Activated B cell treated with CpG ODN at 0.5 μM for 24 hours (primary cell): ENCODE measurements at regions of chr16 and their contacts with region 1.

Region 1: DNA sequence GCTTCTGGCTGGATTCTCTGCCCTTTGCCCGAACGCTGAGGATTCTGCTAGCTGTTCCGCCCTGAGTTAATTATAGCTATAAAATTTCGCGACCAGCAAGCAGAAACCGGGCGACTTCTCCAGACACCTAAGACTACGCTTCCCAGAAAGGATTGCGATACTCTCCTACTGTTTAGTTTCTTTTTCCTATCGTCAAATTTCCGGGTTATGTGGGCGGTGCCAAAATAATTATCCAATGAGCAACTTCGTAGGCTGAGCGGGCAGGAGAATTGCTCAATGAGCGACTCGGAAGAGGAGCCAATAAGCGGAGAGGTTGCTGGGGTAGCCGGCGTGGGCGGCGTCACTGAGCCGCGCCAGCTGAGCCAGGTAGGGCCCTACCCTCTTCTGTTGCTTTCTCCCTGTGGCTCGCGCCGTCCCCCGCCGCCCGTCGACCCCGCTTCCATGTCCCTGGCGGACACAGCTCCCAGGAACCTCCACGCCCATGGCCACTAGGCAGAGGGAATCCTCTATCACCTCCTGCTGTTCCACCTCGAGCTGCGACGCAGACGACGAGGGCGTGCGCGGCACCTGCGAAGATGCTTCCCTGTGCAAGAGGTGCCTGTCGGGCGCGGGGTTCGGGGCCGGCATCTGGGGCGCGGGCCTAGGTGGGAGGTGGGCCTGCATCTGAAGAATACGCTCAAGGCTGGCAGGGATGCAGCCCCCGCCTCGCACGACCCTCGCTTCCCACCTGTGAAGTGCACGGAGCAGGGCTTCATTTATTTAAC is at the start of gene LCMT1:
- DNase-seq: peak; percentile 78
- ATAC-seq: peak; percentile 89
- H3K4me3 Mint-ChIP-seq: peak within 1 kb of the TSS; percentile 95
- H3K27ac Mint-ChIP-seq: peak within 1 kb of the TSS; percentile 94
- H3K4me1 Mint-ChIP-seq: peaks cover 41% of the 10 kb centered on the region
- H3K27me3 Mint-ChIP-seq: no peaks in the 10 kb centered on the region
- CTCF ChIP-seq: no peak
- total RNA-seq, gene LCMT1: 32.2 and 33.6 TPM in 2 replicates

Region 2: DNA sequence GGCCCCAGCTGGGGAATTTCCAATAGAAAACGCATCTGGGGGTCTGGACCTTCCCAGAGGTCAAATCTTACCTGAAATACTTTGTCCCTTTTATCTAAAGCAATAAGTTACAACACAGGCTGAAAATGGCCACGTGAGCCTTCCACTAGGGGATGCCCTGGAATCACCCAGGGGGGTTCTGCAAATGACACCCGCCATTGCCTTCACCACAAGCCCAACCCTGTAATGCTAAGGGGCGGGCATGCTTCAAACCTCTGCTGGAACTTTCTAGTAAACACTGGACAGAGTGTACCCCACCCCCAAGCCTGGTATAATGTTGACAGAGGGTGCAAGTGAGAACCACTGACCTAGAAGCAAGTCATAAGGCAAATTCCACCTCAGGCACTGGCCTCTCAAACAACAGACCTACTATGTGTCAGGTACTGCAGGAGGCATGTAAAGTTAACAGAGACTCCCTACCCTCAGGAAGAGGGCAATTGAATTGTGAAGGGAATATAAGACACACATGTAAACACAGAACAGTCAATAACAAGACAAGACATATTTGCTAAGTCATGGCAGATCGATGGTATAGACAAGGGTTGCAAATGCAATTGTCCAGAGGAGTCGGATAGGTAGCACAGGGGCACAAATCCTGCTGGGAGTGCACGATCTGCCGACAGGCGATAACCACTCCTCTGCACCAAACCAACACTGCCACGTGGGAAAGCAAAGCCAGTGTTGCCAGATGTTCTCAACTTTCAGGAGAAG is 155.4 kb before region 1 on chr16:
- CTCF ChIA-PET with region 1: interaction called, 3 read pairs
- POLR2A ChIA-PET with region 1: no interaction called
- intact Hi-C with region 1: loop called (anchors 2 kb)
- DNase-seq: no peak
- ATAC-seq: peak; percentile 82
- H3K4me3 Mint-ChIP-seq: no peak overlapping the region
- H3K27ac Mint-ChIP-seq: peak overlapping the region; percentile 54
- H3K4me1 Mint-ChIP-seq: peaks cover 2% of the 10 kb centered on the region
- H3K27me3 Mint-ChIP-seq: no peaks in the 10 kb centered on the region
- CTCF ChIP-seq: no peak

Region 3: GRCh38 chr16:25014500-25015147 is 97.0 kb before region 1 on chr16:
- CTCF ChIA-PET with region 1: no interaction called
- POLR2A ChIA-PET with region 1: interaction called, 11 read pairs
- intact Hi-C with region 1: loop called (anchors 1 kb)
- DNase-seq: peak; percentile 35
- ATAC-seq: peak; percentile 14
- H3K4me3 Mint-ChIP-seq: peak overlapping the region; percentile 92
- H3K27ac Mint-ChIP-seq: peak overlapping the region; percentile 85
- H3K4me1 Mint-ChIP-seq: peaks cover 86% of the 10 kb centered on the region
- H3K27me3 Mint-ChIP-seq: no peaks in the 10 kb centered on the region
- CTCF ChIP-seq: no peak

Region 4: GRCh38 chr16:25051406-25052150 is 60.0 kb before region 1 on chr16:
- CTCF ChIA-PET with region 1: interaction called, 32 read pairs
- POLR2A ChIA-PET with region 1: interaction called, 14 read pairs
- intact Hi-C with region 1: loop called (anchors 1 kb)
- DNase-seq: no peak
- ATAC-seq: no peak
- H3K4me3 Mint-ChIP-seq: no peak overlapping the region
- H3K27ac Mint-ChIP-seq: peak overlapping the region; percentile 54
- H3K4me1 Mint-ChIP-seq: peaks cover 49% of the 10 kb centered on the region
- H3K27me3 Mint-ChIP-seq: no peaks in the 10 kb centered on the region
- CTCF ChIP-seq: no peak

Region 5: GRCh38 chr16:25066747-25067631 is 44.6 kb before region 1 on chr16:
- CTCF ChIA-PET with region 1: interaction called, 6 read pairs
- POLR2A ChIA-PET with region 1: interaction called, 31 read pairs
- intact Hi-C with region 1: loop called (anchors 1 kb)
- DNase-seq: peak; percentile 78
- ATAC-seq: peak; percentile 94
- H3K4me3 Mint-ChIP-seq: peak overlapping the region; percentile 90
- H3K27ac Mint-ChIP-seq: peak overlapping the region; percentile 90
- H3K4me1 Mint-ChIP-seq: peaks cover 55% of the 10 kb centered on the region
- H3K27me3 Mint-ChIP-seq: no peaks in the 10 kb centered on the region
- CTCF ChIP-seq: no peak

Region 6: DNA sequence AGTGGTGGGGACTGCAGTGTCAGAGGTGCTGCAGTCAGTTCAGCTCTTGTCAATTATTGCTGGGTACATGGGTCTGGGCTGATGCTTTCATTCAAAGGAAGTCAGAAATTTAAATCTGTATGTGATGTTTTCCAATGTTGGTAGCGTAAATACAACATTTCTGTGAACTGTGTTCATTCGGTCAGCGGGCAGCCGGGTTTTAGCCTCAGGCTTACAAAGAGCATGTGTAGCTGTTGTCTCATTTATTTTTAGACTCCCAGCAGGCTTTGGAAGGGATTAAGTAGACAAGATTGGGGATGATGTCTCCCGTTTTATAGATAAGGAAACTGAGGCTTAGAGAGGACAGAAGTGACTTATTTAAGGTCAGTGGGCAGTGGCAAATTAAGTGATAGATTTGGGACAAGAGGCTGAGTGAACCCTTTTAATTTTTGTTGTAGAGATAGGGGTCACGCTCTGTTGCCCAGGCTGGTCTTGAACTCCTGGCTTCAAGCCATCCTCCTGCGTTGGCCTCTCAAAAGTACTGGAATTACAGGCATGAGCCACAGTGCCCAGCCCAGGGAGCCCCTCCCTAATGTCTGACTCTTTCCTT is 113.2 kb after region 1 on chr16:
- CTCF ChIA-PET with region 1: interaction called, 6 read pairs
- POLR2A ChIA-PET with region 1: interaction called, 3 read pairs
- intact Hi-C with region 1: loop called (anchors 10 kb)
- DNase-seq: no peak
- ATAC-seq: no peak
- H3K4me3 Mint-ChIP-seq: no peak overlapping the region
- H3K27ac Mint-ChIP-seq: no peak overlapping the region
- H3K4me1 Mint-ChIP-seq: no peaks in the 10 kb centered on the region
- H3K27me3 Mint-ChIP-seq: no peaks in the 10 kb centered on the region
- CTCF ChIP-seq: no peak